OCI-LY7 (cell line): ENCODE measurements at regions of chr6 and their contacts with region 1.

Region 1: DNA sequence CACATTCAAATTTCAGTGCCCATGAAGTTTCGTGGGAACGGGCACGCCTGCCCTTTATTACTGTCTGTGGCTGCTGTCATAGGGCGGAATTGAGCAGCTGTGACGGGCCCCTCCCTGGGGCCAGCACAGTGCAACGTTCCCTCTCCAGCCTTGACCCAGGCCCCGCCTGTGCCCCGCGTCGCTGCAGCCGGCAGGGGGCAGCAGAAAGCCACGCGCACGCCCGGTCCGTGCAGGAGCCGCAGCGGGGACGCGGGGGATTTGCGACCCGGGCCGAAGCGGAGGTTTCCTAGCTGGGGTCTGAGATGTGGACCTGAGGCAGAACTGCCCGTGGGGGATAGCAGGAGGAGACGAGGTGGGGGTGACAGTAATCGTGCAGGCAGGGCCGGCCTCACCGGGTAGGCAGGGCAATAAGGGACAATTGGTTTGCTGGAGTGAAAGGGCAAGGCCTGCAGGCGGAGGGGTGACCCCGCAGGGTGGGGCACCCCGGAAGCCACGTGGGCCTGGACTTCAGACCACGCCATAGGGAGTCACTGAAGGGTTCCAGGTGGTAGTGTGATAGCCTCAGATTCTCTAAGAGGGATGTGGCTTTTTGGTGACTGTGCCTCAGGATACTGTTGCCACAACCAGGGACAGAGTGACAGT is 54.4 kb downstream of the SYTL3 start:
- DNase-seq: peak; percentile 85
- H3K4me3 ChIP-seq: peak overlapping the region; percentile 51
- H3K27ac ChIP-seq: no peak overlapping the region
- H3K4me1 ChIP-seq: peaks cover 30% of the 10 kb centered on the region
- CTCF ChIP-seq: peak; percentile 99

Region 2: GRCh38 chr6:158649289-158650143 is 54.8 kb before region 1 on chr6 and contains the start of gene SYTL3:
- CTCF ChIA-PET with region 1: no interaction called
- POLR2A ChIA-PET with region 1: no interaction called
- intact Hi-C with region 1: no loop called
- DNase-seq: peak; percentile 41
- H3K4me3 ChIP-seq: no peak within 1 kb of the TSS
- H3K27ac ChIP-seq: no peak within 1 kb of the TSS
- H3K4me1 ChIP-seq: peaks cover 13% of the 10 kb centered on the region
- CTCF ChIP-seq: no peak
- total RNA-seq, gene SYTL3: 0.32 TPM in 1 of 2 replicates, not detected in the other

Region 3: DNA sequence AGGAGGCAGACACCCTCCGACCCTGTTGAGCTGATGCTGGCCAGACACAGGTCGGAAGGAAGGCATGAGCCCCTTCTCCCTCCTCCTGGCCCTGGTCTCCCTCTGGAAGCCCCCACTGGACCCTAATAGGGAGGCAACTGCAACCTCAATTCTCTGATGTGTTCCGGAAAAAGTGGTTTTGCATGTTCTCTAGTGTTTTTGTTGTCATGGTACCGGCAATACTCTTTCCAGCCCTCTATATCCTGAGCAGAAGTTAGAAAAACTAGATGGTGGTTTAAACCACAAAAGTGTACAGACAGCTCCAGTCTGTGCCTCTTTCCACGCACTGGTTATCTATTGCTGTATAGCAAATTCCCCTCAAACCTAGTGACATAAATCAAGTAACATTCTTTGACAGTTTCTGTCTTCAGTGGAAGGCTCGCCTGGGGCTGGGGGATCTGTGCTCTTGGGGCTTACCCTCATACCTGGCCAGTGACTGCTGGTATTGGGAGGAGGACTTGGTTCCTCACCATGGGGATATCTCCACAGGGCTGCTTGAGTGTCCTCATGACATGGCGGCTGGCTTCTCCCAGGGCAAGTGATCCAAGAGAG is 17.4 kb before region 1 on chr6:
- CTCF ChIA-PET with region 1: no interaction called
- POLR2A ChIA-PET with region 1: no interaction called
- intact Hi-C with region 1: no loop called
- DNase-seq: no peak
- H3K4me3 ChIP-seq: no peak overlapping the region
- H3K27ac ChIP-seq: no peak overlapping the region
- H3K4me1 ChIP-seq: no peaks in the 10 kb centered on the region
- CTCF ChIP-seq: no peak

Region 4: DNA sequence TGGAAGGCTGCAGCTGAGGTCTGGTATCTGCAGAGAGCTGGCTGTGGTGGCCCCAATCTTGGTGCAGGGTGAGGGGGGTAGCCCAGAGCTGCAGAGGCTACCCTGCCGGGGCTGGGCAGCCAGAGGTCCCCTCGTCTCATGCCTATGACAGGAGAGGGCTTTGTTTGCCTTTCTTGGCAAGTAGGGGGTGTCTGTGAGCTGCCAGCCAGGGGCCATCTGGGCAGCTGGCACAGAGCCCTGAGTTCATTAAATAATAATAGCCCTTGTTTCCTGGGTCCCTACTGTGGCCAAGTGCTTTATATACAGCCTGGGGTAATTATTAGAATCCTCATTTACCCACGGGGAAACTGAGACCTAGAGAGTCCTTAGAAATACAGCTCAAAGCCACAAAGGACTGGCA is 48.3 kb after region 1 on chr6:
- CTCF ChIA-PET with region 1: no interaction called
- POLR2A ChIA-PET with region 1: interaction called, 6 read pairs
- intact Hi-C with region 1: loop called (anchors 2 kb)
- DNase-seq: peak; percentile 58
- H3K4me3 ChIP-seq: no peak overlapping the region
- H3K27ac ChIP-seq: no peak overlapping the region
- H3K4me1 ChIP-seq: peaks cover 3% of the 10 kb centered on the region
- CTCF ChIP-seq: peak; percentile 68

Region 5: DNA sequence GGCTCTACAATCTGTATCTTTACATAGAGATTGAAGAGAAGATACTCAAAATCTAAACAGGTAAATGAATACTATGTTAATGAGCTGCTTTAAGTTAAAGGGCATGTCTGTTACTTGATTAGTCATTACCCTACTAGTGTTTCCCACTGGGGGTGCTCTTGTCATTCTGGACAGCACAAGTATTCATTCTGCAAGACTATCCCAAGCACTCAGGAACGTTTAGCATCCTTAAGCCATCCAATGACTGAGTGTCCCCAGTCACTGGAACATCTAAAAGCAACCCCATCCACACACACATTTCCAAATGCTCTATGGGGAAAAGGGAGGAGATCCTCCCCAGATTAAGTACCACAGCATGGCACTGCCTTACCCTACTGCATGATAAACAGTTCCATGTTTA is 89.1 kb after region 1 on chr6:
- CTCF ChIA-PET with region 1: interaction called, 4 read pairs
- POLR2A ChIA-PET with region 1: no interaction called
- intact Hi-C with region 1: loop called (anchors 10 kb)
- DNase-seq: peak; percentile 69
- H3K4me3 ChIP-seq: peak overlapping the region; percentile 2
- H3K27ac ChIP-seq: peak overlapping the region; percentile 68
- H3K4me1 ChIP-seq: peaks cover 97% of the 10 kb centered on the region
- CTCF ChIP-seq: peak; percentile 85

Region 6: GRCh38 chr6:159134701-159135364 is 430.5 kb after region 1 on chr6:
- CTCF ChIA-PET with region 1: no interaction called
- POLR2A ChIA-PET with region 1: no interaction called
- intact Hi-C with region 1: loop called (anchors 2 kb)
- DNase-seq: peak; percentile 88
- H3K4me3 ChIP-seq: peak overlapping the region; percentile 4
- H3K27ac ChIP-seq: no peak overlapping the region
- H3K4me1 ChIP-seq: peaks cover 52% of the 10 kb centered on the region
- CTCF ChIP-seq: peak; percentile 100